ENCODE measurements at regions of chr9 and their contacts with region 1.

Region 1: GRCh38 chr9:21491742-21492141 is 9.6 kb upstream of the IFNE start:
- DNase-seq: no peak
- ATAC-seq: no peak
- H3K4me3 ChIP-seq: no peak overlapping the region
- H3K4me3 Mint-ChIP-seq: no peak overlapping the region
- H3K27ac ChIP-seq: no peak overlapping the region
- H3K27ac Mint-ChIP-seq: no peak overlapping the region
- H3K4me1 ChIP-seq: no peaks in the 10 kb centered on the region
- H3K4me1 Mint-ChIP-seq: peaks cover 0 to 10% (median 0%) of the 10 kb centered on the region in 7 donors
- H3K27me3 ChIP-seq: no peaks in the 10 kb centered on the region
- H3K27me3 Mint-ChIP-seq: peaks cover 0 to 16% (median 3%) of the 10 kb centered on the region in 5 donors

Region 2: GRCh38 chr9:21591221-21592062 is 99.7 kb after region 1 on chr9:
- CTCF ChIA-PET with region 1: no interaction called
- POLR2A ChIA-PET with region 1: no interaction called
- intact Hi-C with region 1: no loop called
- DNase-seq: peak in 1 of 9 donors; percentile 51
- ATAC-seq: peak; percentile 83
- H3K4me3 ChIP-seq: no peak overlapping the region
- H3K4me3 Mint-ChIP-seq: no peak overlapping the region
- H3K27ac ChIP-seq: no peak overlapping the region
- H3K27ac Mint-ChIP-seq: peak overlapping the region in 1 of 9 donors; percentile 40
- H3K4me1 ChIP-seq: no peaks in the 10 kb centered on the region
- H3K4me1 Mint-ChIP-seq: peaks cover 8 to 25% (median 11%) of the 10 kb centered on the region in 7 donors
- H3K27me3 ChIP-seq: no peaks in the 10 kb centered on the region
- H3K27me3 Mint-ChIP-seq: peaks cover 0 to 7% (median 0%) of the 10 kb centered on the region in 5 donors

Region 3: DNA sequence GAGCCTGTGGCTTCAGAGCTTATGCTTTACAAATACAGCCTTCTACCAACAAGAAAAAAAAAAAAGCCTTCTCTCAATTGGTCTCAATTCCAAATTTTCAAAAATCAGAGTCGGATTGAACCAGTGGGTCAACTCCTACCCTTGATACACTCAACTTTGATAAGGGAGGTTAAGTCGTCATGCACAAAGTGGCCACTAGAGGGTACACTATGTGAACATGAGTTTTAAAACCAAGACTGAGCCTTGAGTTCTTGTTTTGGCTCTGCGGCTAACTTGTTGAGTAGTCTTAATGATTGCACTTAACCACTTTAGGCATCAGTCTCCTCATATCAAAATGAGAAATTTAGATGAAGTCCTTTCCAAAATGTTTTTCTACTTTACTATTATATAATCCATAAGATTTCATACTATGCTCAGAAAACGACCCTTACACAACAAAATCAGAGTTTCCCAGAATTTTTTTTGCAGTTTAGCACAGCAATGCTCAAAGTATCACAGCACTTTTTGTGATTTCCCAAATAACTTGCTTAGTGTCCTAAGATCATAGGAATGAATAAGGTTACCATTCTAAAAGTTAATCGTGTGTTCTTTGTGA is 217.8 kb after region 1 on chr9:
- CTCF ChIA-PET with region 1: no interaction called
- POLR2A ChIA-PET with region 1: no interaction called
- intact Hi-C with region 1: loop called in 1 of 2 experiments (anchors 1 kb)
- DNase-seq: peak; percentile 14 to 56 (median 46)
- ATAC-seq: peak; percentile 88
- H3K4me3 ChIP-seq: no peak overlapping the region
- H3K4me3 Mint-ChIP-seq: no peak overlapping the region
- H3K27ac ChIP-seq: no peak overlapping the region
- H3K27ac Mint-ChIP-seq: no peak overlapping the region
- H3K4me1 ChIP-seq: no peaks in the 10 kb centered on the region
- H3K4me1 Mint-ChIP-seq: peaks cover 0 to 22% (median 15%) of the 10 kb centered on the region in 7 donors
- H3K27me3 ChIP-seq: no peaks in the 10 kb centered on the region
- H3K27me3 Mint-ChIP-seq: peaks cover 0 to 27% (median 0%) of the 10 kb centered on the region in 5 donors

Region 4: GRCh38 chr9:21931428-21931827 is 439.7 kb after region 1 on chr9:
- CTCF ChIA-PET with region 1: no interaction called
- POLR2A ChIA-PET with region 1: no interaction called
- intact Hi-C with region 1: no loop called
- DNase-seq: no peak
- ATAC-seq: no peak
- H3K4me3 ChIP-seq: no peak overlapping the region
- H3K4me3 Mint-ChIP-seq: no peak overlapping the region
- H3K27ac ChIP-seq: no peak overlapping the region
- H3K27ac Mint-ChIP-seq: no peak overlapping the region
- H3K4me1 ChIP-seq: no peaks in the 10 kb centered on the region
- H3K4me1 Mint-ChIP-seq: peaks cover 0 to 8% (median 0%) of the 10 kb centered on the region in 7 donors
- H3K27me3 ChIP-seq: no peaks in the 10 kb centered on the region
- H3K27me3 Mint-ChIP-seq: peaks cover 0 to 2% (median 0%) of the 10 kb centered on the region in 5 donors

Measured in naive thymus-derived CD4-positive, alpha-beta T cell (primary cell).